K562 (cell line): ENCODE measurements at regions of chr1 and their contacts with region 1.

Region 1: DNA sequence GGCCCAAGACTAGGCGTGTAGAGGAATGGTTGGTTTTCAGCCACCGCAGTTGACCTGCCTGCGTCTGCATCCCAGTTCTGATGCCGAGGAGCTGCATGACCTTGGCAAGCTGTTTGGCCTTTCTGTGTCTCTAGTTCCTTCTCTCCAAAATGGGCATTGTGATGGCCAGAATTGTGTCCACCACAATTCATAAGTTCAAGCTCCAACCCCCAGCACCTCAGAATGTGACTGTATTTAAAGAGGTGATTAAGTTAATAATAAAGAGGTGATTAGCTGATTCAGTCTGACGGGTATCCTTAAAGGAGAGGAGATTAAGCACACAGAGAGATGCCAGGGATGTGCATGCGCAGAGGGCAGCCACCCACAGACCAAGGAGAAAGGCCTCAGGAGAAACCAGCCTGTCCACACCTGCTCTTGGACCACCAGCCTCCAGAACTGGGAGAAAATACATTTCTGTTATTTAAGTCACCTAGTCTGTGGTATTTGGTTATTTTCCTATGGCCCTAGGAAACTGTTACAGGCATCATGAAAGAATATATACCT is 28.5 kb downstream of the MAB21L3 start:
- DNase-seq: no peak
- ATAC-seq: no peak
- H3K4me3 ChIP-seq: no peak overlapping the region
- H3K27ac ChIP-seq: no peak overlapping the region
- H3K4me1 ChIP-seq: no peaks in the 10 kb centered on the region; a peak in 1 of 5 replicates
- H3K27me3 ChIP-seq: no peaks in the 10 kb centered on the region
- CTCF ChIP-seq: no peak
- EP300 ChIP-seq: no peak
- POLR2A ChIP-seq: no peak
- RAD21 ChIP-seq: no peak

Region 2: DNA sequence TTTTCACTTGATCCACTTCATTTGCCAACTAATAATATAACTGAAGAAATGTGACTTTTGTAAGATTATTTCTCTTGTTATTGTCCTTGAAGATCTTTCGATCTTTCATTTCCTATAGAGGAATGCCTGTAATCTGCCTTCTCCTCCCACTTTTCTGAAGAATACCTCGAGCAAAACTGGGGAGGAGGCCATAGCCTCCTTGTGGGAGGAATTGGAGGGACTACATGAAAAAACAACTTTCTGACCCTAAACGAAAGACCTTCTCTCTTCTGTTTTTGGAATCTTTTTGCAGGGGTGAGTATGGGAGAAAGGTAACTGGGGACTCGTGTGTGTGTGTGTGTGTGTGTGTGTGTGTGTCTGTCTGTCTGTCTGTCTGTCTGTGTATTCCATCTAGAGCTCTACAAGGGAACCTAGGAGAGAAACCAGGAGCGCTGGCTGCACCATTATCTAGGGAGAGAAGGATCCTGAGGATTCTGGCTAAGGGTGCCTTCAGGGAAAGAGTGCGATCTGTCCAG is 60.9 kb before region 1 on chr1:
- CTCF ChIA-PET with region 1: no interaction called
- POLR2A ChIA-PET with region 1: no interaction called
- in situ Hi-C with region 1: no loop called
- intact Hi-C with region 1: no loop called
- DNase-seq: no peak
- ATAC-seq: no peak
- H3K4me3 ChIP-seq: no peak overlapping the region
- H3K27ac ChIP-seq: no peak overlapping the region
- H3K4me1 ChIP-seq: no peaks in the 10 kb centered on the region
- H3K27me3 ChIP-seq: no peaks in the 10 kb centered on the region; a peak in 1 of 5 replicates
- CTCF ChIP-seq: no peak
- EP300 ChIP-seq: no peak
- POLR2A ChIP-seq: no peak
- RAD21 ChIP-seq: peak in 1 of 2 experiments; percentile 21; a peak in 2 of 4 replicates

Region 3: GRCh38 chr1:116218990-116219321 is 79.3 kb after region 1 on chr1:
- CTCF ChIA-PET with region 1: no interaction called
- POLR2A ChIA-PET with region 1: no interaction called
- in situ Hi-C with region 1: no loop called
- intact Hi-C with region 1: no loop called
- DNase-seq: no peak
- ATAC-seq: no peak
- H3K4me3 ChIP-seq: no peak overlapping the region
- H3K27ac ChIP-seq: no peak overlapping the region
- H3K4me1 ChIP-seq: no peaks in the 10 kb centered on the region
- H3K27me3 ChIP-seq: peaks cover 6 to 29% of the 10 kb centered on the region in 2 experiments; a peak in 4 of 5 replicates
- CTCF ChIP-seq: no peak
- EP300 ChIP-seq: no peak
- POLR2A ChIP-seq: no peak
- RAD21 ChIP-seq: no peak

Region 4: DNA sequence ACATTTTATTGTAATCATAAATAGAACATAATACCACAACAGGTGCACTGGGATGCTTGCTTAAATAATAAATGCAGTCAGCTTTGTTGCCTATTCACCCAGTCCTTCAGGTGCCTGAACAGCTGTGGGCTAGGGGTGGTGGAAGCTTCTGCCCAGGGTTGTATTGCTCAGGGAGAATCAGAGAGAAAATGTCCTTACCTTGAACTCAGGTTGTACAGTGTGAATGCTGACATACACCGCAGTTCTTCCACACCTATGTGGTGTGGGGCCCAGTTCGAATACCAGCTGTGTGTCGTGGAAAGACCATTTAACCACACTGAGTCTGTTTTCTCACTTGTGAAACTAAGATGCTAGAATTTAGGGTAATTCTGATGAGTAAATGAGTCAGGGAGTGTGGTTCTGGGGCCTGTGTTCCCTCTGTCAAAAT is 117.7 kb after region 1 on chr1:
- CTCF ChIA-PET with region 1: no interaction called
- POLR2A ChIA-PET with region 1: no interaction called
- in situ Hi-C with region 1: no loop called
- intact Hi-C with region 1: no loop called
- DNase-seq: no peak
- ATAC-seq: no peak
- H3K4me3 ChIP-seq: no peak overlapping the region
- H3K27ac ChIP-seq: no peak overlapping the region
- H3K4me1 ChIP-seq: no peaks in the 10 kb centered on the region; a peak in 1 of 5 replicates
- H3K27me3 ChIP-seq: peaks cover 18 to 26% of the 10 kb centered on the region in 2 experiments
- CTCF ChIP-seq: no peak
- EP300 ChIP-seq: no peak
- POLR2A ChIP-seq: no peak
- RAD21 ChIP-seq: no peak

Region 5: DNA sequence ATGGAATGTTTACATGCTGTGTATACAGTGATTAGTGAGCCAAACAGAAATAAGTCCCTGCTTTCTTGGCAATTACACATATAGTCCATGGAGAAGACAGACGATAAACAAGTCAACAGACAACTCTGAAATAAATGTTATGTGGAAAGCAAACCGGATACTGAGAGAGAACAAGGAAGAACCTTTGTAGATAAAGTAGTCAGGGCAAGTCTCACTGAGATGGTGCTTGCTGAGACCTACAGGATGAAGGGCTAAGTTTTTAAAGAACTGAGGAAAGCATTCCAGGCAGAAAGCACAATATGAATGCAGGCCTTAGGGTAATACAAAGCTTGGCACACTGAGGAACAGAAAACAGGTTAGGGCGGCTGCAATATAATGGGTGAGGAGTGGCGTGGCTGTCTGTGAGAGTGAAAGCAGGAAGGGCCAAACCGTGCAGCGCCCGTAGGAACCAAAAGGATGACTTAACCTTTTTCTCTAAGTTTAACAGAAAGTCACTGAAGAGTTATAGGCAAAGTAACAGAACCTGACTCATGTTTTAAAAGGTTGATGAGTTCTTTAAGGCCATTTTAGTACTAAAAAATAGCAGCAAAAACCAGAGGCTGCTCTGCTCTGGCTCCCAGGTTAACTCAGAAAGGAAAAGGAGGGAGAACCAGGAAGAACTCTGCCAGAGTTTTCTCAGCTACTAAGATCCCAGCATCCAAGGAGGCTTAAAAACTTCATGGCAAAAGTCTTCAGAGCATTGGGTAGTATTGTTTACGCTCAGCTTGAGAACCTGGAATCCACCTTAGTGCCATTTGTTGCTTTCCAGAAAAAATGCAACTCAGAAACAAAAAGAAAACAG is 911.8 kb after region 1 on chr1:
- CTCF ChIA-PET with region 1: interaction called, 18 read pairs
- POLR2A ChIA-PET with region 1: no interaction called
- in situ Hi-C with region 1: no loop called
- intact Hi-C with region 1: loop called (anchors 10 kb)
- DNase-seq: peak in 1 of 4 experiments; percentile 30
- ATAC-seq: peak; percentile 71
- H3K4me3 ChIP-seq: no peak overlapping the region
- H3K27ac ChIP-seq: peak overlapping the region; percentile 16
- H3K4me1 ChIP-seq: no peaks in the 10 kb centered on the region; a peak in 2 of 5 replicates
- H3K27me3 ChIP-seq: no peaks in the 10 kb centered on the region
- CTCF ChIP-seq: no peak
- EP300 ChIP-seq: no peak
- POLR2A ChIP-seq: no peak
- RAD21 ChIP-seq: no peak